Left ventricle myocardium superior (tissue), 1 donor: ENCODE measurements at regions of chr3 and their contacts with region 1.

Region 1: DNA sequence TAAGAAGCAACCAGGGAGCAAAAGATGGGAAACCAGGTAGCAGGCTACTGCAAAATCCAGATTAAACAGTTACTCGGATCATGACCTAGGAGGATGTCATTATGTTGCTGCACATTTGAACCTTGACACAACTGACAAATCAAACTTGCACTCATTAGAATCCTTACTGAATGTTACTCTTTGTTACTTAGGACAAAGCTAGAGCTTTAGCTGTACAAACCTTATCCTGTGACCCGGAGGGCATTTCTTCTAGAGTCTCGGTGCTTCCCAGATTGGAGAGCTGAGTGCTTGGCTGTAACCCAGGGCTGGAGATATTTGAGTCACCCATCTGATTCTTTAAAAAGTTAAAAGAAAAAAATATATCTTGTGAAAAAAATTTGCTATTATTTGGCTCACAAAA is 43.4 kb downstream of the DCP1A start:
- DNase-seq: no peak
- ATAC-seq: peak; percentile 60

Region 2: DNA sequence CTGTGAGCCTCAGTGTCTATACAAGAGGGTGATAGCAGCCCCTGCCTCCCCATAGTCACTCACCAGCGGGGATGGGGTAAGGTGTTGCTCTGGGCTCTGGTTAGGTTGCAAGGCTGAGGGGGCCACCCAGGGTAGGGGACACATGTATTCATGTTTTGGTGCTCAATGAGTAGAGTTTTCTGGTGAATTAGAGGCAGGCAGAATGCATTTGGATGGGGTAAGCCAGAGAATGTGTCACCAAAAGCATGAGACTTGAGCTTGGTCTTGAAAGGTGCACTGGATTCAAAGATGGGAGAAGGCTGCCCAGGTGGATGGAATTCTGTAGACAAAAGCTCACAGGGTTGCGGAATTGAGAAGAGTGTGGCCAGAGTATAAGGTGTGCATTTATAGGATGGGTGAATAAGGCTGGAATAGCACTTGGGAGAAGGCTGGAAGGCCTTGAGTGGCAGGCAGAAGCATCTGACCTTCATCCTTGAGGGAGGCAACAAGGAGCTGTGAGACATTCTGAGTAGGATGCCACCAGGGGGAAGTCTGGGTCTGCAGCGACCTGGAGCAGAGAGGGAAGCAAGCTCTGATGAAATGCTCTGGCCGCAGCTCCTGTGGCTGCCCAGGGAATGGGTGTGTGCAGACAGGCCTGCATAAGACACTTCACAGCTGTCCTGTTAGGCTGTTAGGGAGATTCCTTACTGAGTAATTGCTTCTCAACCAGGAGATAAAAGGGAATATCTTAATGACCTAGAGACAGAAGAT is 392.6 kb after region 1 on chr3:
- intact Hi-C with region 1: loop called (anchors 5 kb)
- DNase-seq: no peak
- ATAC-seq: peak; percentile 73

Region 3: DNA sequence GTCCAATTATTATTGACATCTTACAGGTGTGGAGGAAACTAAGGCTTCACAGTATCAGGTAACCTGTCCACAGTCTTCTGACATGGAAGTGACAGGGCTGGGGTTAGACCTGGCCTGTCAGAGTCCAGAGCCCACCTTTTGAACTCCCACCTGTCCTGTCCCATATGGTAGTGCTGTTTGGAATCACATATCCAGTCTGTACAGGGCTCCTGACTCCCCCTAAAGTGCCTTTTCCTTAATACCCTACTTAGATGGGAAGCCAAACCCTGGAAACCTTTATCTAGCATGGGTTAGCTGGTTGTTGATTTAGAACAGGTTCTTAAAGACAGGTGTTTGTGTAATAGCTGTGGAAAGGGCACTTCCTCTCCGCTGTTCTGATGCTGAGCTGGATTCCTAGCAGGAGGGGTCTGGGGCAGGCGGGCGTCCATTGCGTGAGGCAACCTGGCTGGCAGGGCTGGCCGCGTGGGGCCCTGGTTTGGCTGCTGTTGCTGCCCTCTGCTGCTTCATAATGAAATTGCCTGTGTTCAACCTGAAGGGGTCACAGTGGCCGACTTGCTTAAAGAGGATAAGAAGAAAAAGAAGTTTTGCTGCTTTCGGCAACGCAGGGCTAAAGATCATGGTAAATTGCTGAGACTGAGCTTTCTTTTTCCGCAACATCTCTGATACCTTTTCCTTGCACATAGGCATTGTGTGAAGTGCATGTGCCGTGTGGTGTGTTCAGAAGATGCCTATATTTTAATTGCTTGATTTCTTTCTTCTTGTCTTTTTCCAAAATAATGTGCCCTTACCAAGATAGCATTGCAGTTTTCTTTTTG is 406.1 kb after region 1 on chr3:
- intact Hi-C with region 1: loop called (anchors 5 kb)
- DNase-seq: peak; percentile 84
- ATAC-seq: peak; percentile 68